Psoas muscle (tissue), 8 donors: ENCODE measurements at regions of chr4 and their contacts with region 1.

Region 1: GRCh38 chr4:176223561-176223960 is 28.2 kb upstream of the SPATA4 start:
- DNase-seq: no peak
- ATAC-seq: peak in 1 of 4 donors; percentile 22
- H3K4me3 ChIP-seq: no peak overlapping the region
- H3K27ac ChIP-seq: peak overlapping the region; percentile 95
- H3K4me1 ChIP-seq: peaks cover 30% of the 10 kb centered on the region
- H3K27me3 ChIP-seq: no peaks in the 10 kb centered on the region
- CTCF ChIP-seq: no peak

Region 2: DNA sequence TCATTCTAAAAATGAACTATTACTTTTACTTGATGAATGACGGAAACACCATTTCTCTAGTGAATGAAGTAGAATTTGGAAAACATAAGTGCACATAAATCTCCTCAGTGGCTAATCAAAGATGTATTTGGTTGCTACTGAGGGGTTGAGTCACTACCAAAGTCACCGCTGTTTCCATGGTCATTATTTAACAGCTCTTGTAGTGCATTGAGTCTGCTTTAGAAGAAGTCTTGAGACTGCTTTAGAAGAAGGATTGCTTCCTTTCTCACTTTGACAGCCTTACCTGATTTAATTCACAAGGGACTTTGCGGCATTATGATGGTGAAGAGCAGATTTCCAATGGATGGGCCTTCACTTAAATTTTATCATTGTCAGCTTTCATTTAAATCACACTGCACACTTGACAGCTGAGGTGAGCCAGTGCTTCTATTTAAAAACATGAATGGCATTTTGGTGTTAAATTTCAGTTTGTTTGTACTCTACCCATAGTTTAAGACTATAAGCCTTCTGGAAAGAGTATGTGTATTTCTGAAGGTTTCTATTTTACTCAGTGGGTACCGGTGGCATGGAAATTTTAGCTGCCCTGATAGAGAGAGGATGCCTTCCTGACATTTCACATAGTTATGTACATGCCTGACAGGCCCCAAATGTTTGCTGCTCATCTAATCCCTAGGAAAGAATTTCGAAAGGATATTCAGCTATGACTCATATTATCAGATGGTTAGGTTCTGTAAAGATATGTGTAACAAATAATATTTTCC is 35.9 kb after region 1 on chr4:
- intact Hi-C with region 1: loop called in 1 of 2 experiments (anchors 5 kb)
- DNase-seq: no peak
- ATAC-seq: peak; percentile 53 to 80 (median 76)
- H3K4me3 ChIP-seq: peak overlapping the region; percentile 70
- H3K27ac ChIP-seq: peak overlapping the region; percentile 94
- H3K4me1 ChIP-seq: peaks cover 61% of the 10 kb centered on the region
- H3K27me3 ChIP-seq: no peaks in the 10 kb centered on the region
- CTCF ChIP-seq: no peak

Region 3: DNA sequence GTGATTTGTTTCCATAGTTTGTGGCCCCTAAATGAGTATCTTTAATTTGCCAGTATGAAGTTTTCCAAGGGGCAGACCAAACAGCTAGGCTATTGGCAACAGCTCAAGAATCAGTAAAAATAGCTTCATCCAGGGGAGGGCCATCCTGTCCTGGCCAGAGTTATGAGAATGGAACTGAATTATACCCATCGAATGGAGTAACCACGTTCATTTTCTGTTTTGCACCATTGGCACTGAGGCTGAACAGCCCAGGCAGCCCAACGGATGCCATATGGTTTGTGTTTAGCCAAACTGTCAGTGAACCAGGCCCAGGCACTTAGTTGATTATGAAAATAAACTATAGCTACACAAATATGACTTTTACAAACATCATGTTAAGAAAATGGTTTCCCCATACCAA is 63.2 kb after region 1 on chr4:
- intact Hi-C with region 1: no loop called
- DNase-seq: no peak
- ATAC-seq: peak in 3 of 4 donors; percentile 51 to 78 (median 60)
- H3K4me3 ChIP-seq: no peak overlapping the region
- H3K27ac ChIP-seq: no peak overlapping the region
- H3K4me1 ChIP-seq: peaks cover 8% of the 10 kb centered on the region
- H3K27me3 ChIP-seq: no peaks in the 10 kb centered on the region
- CTCF ChIP-seq: no peak